ENCODE measurements at regions of chr1 and their contacts with region 1.

Region 1: DNA sequence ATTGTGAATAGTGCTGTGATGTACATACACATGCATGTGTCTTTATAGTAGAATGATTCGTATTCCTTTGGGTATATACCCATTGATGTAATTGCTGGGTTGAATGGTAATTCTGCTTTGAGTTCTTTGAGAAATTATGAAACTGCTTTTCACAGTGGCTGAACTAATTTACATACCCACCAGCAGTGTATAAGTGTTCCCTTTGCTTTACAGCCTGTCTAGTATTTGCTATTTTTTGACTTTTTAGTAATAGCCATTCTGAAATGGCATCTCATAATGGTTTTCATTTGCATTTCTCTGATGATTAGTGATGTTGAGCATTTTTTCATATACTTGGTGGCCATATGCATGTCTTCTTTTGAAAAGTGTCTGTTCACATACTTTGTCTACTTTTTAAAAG is 54.5 kb upstream of the FAM78B start:
- DNase-seq: no peak
- H3K4me3 ChIP-seq: no peak overlapping the region
- H3K27ac ChIP-seq: no peak overlapping the region
- H3K4me1 ChIP-seq: no peaks in the 10 kb centered on the region
- H3K27me3 ChIP-seq: no peaks in the 10 kb centered on the region
- CTCF ChIP-seq: no peak
- POLR2A ChIP-seq: no peak

Region 2: GRCh38 chr1:166197141-166197540 is 24.2 kb before region 1 on chr1:
- intact Hi-C with region 1: no loop called
- DNase-seq: no peak
- H3K4me3 ChIP-seq: no peak overlapping the region
- H3K27ac ChIP-seq: no peak overlapping the region
- H3K4me1 ChIP-seq: no peaks in the 10 kb centered on the region
- H3K27me3 ChIP-seq: no peaks in the 10 kb centered on the region
- CTCF ChIP-seq: no peak
- POLR2A ChIP-seq: no peak

Region 3: DNA sequence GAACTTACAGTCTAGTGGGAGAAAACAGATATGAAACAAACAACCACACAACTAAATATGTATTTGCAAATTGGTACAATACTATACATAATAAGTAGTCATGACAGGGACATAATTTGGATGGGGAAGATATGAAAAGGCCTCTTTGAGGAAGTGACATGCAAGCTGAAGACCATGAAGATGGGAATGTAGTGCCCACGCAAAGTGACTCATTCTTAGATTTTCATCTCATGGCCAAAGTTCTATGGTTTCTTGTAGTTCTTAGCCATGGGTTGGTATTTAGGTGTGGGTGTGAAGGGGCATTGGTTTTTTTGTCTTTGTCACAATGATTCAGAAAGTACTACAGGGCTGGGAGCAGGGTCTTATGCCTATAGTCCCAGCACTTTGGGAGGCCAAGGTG is 50.8 kb after region 1 on chr1:
- intact Hi-C with region 1: loop called (anchors 2 kb)
- DNase-seq: no peak
- H3K4me3 ChIP-seq: no peak overlapping the region
- H3K27ac ChIP-seq: no peak overlapping the region
- H3K4me1 ChIP-seq: no peaks in the 10 kb centered on the region
- H3K27me3 ChIP-seq: no peaks in the 10 kb centered on the region
- CTCF ChIP-seq: no peak
- POLR2A ChIP-seq: no peak

Measured in breast epithelium (tissue), 4 donors.